Lower leg skin (tissue), 4 donors: ENCODE measurements at regions of chr20 and their contacts with region 1.

Region 1: GRCh38 chr20:47778398-47779338 is 6.6 kb downstream of the SULF2 start:
- DNase-seq: no peak
- H3K4me3 ChIP-seq: no peak overlapping the region
- CTCF ChIP-seq: no peak
- POLR2A ChIP-seq: no peak

Region 2: GRCh38 chr20:47686545-47686944 is 92.1 kb before region 1 on chr20:
- intact Hi-C with region 1: loop called (anchors 5 kb)
- DNase-seq: no peak
- H3K4me3 ChIP-seq: no peak overlapping the region
- CTCF ChIP-seq: no peak
- POLR2A ChIP-seq: no peak